ENCODE measurements at regions of chr16 and their contacts with region 1.

Region 1: DNA sequence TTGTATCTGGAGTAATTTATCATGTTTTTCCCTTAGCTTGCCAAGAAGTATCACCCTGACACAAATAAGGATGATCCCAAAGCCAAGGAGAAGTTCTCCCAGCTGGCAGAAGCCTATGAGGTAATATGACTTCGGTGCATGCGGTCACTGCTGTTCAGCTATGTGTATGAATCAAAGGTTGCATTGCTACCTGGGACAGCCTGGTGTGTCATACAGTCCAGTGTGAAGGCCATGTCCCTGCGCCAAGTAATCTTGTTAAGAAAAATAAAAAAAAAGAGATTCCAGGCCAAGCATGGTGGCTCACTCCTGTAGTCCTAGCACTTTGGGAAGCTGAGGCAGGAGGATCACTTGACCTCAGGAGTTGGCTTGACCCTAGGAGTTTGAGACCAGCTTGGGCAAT is 11.7 kb downstream of the DNAJA3 start:
- DNase-seq: no peak
- ATAC-seq: no peak
- H3K4me3 ChIP-seq: no peak overlapping the region
- H3K27ac ChIP-seq: no peak overlapping the region
- H3K4me1 ChIP-seq: no peaks in the 10 kb centered on the region
- H3K27me3 ChIP-seq: no peaks in the 10 kb centered on the region
- CTCF ChIP-seq: no peak

Region 2: GRCh38 chr16:4599037-4599436 is 161.7 kb after region 1 on chr16:
- CTCF ChIA-PET with region 1: interaction called, 12 read pairs
- POLR2A ChIA-PET with region 1: no interaction called
- in situ Hi-C with region 1: no loop called
- intact Hi-C with region 1: no loop called
- DNase-seq: no peak
- ATAC-seq: no peak
- H3K4me3 ChIP-seq: no peak overlapping the region
- H3K27ac ChIP-seq: no peak overlapping the region
- H3K4me1 ChIP-seq: no peaks in the 10 kb centered on the region; the same call in 1 of the 2 replicates
- H3K27me3 ChIP-seq: no peaks in the 10 kb centered on the region
- CTCF ChIP-seq: no peak

Region 3: GRCh38 chr16:5461141-5461540 is 1023.8 kb after region 1 on chr16:
- CTCF ChIA-PET with region 1: no interaction called
- POLR2A ChIA-PET with region 1: no interaction called
- in situ Hi-C with region 1: no loop called
- intact Hi-C with region 1: no loop called
- DNase-seq: no peak
- ATAC-seq: no peak
- H3K4me3 ChIP-seq: no peak overlapping the region
- H3K27ac ChIP-seq: no peak overlapping the region
- H3K4me1 ChIP-seq: no peaks in the 10 kb centered on the region
- H3K27me3 ChIP-seq: peaks cover 13% of the 10 kb centered on the region; the same call in 1 of the 2 replicates
- CTCF ChIP-seq: no peak

Measured in Panc1 (cell line).